Calu3 (cell line): ENCODE measurements at regions of chr12 and their contacts with region 1.

Region 1: DNA sequence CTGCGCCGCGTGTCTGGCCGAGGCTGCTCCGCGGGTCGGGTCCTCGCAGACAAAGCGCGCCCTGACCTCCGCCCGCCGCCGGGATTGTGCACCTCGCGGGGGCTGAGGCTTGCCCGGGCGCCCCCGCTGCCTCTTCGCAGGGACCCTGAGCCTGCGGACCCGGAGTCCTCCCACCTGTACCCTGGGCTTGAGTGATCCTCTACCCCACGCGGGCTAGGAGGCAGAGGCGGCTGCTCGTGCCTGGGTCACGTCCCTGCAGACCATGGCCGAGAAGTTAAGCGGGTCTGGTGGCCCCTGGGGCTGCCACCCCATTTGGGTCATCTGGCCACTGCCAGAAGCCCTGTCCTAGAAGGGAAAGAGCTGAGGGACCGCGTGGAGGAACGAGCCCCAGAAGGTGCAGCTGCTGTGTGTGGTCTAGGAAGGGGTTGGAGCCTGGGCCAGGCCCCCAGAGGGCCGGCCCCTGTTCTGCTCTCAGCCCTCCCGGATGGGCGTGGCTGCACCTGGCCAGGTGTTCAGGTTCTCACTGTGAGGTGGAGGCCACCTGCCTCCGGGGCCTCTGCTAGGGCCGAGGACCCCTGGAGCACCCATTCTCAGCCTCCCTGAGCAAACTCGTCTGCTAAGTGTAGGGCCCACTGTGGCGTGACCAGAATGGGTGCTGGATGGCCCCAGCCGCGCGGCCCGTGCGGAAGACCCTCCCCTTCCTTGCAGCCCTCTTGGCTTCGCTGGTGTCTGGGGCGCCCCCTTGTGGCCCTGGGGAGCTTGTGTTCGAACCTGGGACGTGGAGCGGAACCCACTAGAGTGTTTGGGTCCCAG is 49.6 kb downstream of the LRCOL1 start:
- DNase-seq: peak; percentile 92
- H3K4me3 Mint-ChIP-seq: peak overlapping the region; percentile 88
- H3K27ac Mint-ChIP-seq: peak overlapping the region; percentile 48
- H3K4me1 Mint-ChIP-seq: no peaks in the 10 kb centered on the region
- H3K27me3 Mint-ChIP-seq: no peaks in the 10 kb centered on the region
- CTCF ChIP-seq: peak; percentile 94

Region 2: DNA sequence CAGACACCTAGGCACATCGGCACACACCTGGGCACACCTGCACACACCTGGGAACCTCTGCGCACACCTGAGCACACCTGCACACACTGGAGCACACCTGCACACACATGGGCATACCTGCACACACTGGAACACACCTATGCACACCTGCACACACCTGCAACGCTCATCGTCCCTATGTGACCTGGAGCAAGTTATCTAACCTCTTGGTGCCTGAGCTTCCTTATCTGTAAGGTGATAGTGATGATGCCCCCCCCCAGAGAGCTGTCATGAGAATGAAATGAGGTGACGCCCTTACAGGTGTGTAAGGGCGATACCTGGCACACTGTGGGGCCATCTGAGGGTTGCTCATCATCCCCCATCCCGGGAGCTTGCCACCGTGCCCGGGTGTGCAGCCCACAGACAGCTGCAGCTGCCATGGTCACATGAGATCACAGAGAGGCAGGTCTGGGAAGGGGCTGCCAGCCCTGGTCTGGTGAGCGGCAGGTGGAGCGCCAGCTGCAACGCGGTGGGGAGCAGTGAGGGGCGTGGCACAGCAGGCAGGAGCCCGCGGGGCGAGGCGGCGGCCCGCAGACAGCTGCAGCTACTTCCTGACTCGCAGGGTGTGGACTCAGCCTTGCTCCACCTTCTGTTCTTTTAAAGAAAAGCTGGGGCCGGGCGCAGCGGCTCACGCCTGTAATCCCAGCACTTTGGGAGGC is 130.7 kb before region 1 on chr12:
- CTCF ChIA-PET with region 1: interaction called, 6 read pairs
- intact Hi-C with region 1: loop called (anchors 5 kb)
- DNase-seq: peak; percentile 74
- H3K4me3 Mint-ChIP-seq: peak overlapping the region; percentile 46
- H3K27ac Mint-ChIP-seq: peak overlapping the region; percentile 24
- H3K4me1 Mint-ChIP-seq: peaks cover 35% of the 10 kb centered on the region
- H3K27me3 Mint-ChIP-seq: peaks cover 80% of the 10 kb centered on the region
- CTCF ChIP-seq: no peak

Region 3: DNA sequence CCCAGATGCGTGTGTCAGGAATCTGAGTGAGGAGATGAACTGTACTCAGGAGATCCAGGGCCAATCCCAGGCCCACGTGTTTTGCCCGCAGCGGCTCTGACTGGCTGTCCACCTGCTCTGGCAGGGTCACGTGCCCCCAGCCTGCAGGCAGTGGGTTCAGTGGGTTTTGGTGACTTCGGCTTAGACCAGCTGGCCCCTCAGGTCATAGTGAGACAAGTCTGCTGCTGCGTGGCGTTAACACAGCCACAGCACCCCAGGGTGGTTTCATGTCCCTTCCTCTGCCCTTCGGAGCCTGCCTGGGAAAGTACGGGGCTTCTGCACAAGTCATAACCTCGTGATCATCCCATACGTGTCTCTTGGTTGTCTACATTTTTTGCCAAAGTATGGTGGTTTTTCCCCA is 68.3 kb before region 1 on chr12:
- CTCF ChIA-PET with region 1: no interaction called
- intact Hi-C with region 1: loop called (anchors 2 kb)
- DNase-seq: no peak
- H3K4me3 Mint-ChIP-seq: peak overlapping the region; percentile 76
- H3K27ac Mint-ChIP-seq: no peak overlapping the region
- H3K4me1 Mint-ChIP-seq: peaks cover 58% of the 10 kb centered on the region
- H3K27me3 Mint-ChIP-seq: peaks cover 19% of the 10 kb centered on the region
- CTCF ChIP-seq: no peak

Region 4: GRCh38 chr12:132523576-132524331 is 37.1 kb before region 1 on chr12:
- CTCF ChIA-PET with region 1: interaction called, 7 read pairs
- intact Hi-C with region 1: loop called (anchors 2 kb)
- DNase-seq: peak; percentile 92
- H3K4me3 Mint-ChIP-seq: peak overlapping the region; percentile 50
- H3K27ac Mint-ChIP-seq: no peak overlapping the region
- H3K4me1 Mint-ChIP-seq: peaks cover 16% of the 10 kb centered on the region
- H3K27me3 Mint-ChIP-seq: no peaks in the 10 kb centered on the region
- CTCF ChIP-seq: peak; percentile 93

Region 5: DNA sequence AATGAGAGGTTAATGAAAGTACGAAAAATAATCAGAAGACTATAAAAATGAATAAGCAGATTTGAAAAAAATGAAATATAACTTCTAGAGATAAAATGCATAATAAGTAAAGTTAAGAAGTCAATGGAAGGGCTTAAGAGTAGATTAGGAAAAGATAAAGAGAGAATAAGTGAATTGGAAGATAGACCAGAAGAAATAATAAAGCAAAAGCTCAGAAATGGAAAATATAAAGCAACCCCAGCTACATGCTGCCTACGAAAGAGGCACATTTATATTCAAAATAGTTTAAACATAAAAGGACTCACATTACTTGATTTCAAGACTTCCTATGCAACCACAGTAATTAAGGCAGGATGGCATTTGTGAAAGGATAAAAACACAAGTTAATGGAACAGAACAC is 375.3 kb after region 1 on chr12:
- CTCF ChIA-PET with region 1: no interaction called
- intact Hi-C with region 1: no loop called
- DNase-seq: no peak
- H3K4me3 Mint-ChIP-seq: no peak overlapping the region
- H3K27ac Mint-ChIP-seq: no peak overlapping the region
- H3K4me1 Mint-ChIP-seq: no peaks in the 10 kb centered on the region
- H3K27me3 Mint-ChIP-seq: no peaks in the 10 kb centered on the region
- CTCF ChIP-seq: no peak